ENCODE measurements at regions of chr11 and their contacts with region 1.

Region 1: GRCh38 chr11:95231127-95231880 is at the start of gene SESN3:
- DNase-seq: peak; percentile 96 to 99 (median 98)
- ATAC-seq: peak; percentile 88
- H3K4me3 ChIP-seq: peak within 1 kb of the TSS; percentile 82
- H3K4me3 Mint-ChIP-seq: peak within 1 kb of the TSS; percentile 98
- H3K27ac ChIP-seq: peak within 1 kb of the TSS; percentile 69 to 82
- H3K27ac Mint-ChIP-seq: peak within 1 kb of the TSS; percentile 89
- H3K4me1 ChIP-seq: peaks cover 16% of the 10 kb centered on the region
- H3K4me1 Mint-ChIP-seq: peaks cover 47% of the 10 kb centered on the region
- H3K27me3 ChIP-seq: no peaks in the 10 kb centered on the region
- H3K27me3 Mint-ChIP-seq: no peaks in the 10 kb centered on the region
- CTCF ChIP-seq: no peak
- total RNA-seq, gene SESN3: 63.9 to 69.1 TPM

Region 2: GRCh38 chr11:95108159-95108611 is 123.1 kb before region 1 on chr11:
- CTCF ChIA-PET with region 1: no interaction called
- POLR2A ChIA-PET with region 1: no interaction called
- intact Hi-C with region 1: no loop called
- DNase-seq: no peak
- ATAC-seq: no peak
- H3K4me3 ChIP-seq: no peak overlapping the region
- H3K4me3 Mint-ChIP-seq: no peak overlapping the region
- H3K27ac ChIP-seq: no peak overlapping the region
- H3K27ac Mint-ChIP-seq: no peak overlapping the region
- H3K4me1 ChIP-seq: no peaks in the 10 kb centered on the region
- H3K4me1 Mint-ChIP-seq: peaks cover 6% of the 10 kb centered on the region
- H3K27me3 ChIP-seq: no peaks in the 10 kb centered on the region
- H3K27me3 Mint-ChIP-seq: no peaks in the 10 kb centered on the region
- CTCF ChIP-seq: no peak

Region 3: DNA sequence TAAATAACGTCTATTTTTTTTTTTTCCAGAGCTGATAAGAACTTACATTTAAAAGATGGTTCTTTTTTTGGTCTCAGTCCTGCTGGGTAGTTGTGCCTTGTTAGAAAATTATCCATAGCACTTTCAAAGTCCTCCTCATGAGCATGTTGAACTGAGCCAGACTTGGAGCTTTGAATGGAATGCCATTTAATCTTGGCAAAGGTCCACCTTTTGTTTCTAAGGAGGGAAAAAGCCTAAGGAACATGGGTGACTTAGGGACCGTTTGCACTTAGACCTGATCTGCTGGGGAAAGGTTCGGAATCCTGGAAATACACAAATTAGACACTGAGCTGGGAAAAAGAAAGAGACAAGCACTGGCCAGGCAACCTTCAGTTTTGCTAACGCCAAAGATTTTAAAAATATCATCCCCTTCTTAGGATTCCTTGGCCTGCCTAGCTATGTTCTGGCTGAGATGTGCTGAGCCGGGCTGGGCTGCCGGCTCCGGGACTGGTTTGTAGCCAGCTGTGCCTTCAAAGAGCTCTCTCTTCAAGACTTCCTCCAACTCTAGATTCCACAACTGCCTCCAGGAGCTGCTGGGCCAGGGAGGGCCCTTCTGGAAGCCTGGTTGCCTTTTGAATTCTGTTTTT is 74.3 kb before region 1 on chr11:
- CTCF ChIA-PET with region 1: interaction called, 11 read pairs
- POLR2A ChIA-PET with region 1: interaction called, 82 read pairs
- intact Hi-C with region 1: loop called in 1 of 2 experiments (anchors 5 kb)
- DNase-seq: no peak
- ATAC-seq: no peak
- H3K4me3 ChIP-seq: no peak overlapping the region
- H3K4me3 Mint-ChIP-seq: no peak overlapping the region
- H3K27ac ChIP-seq: no peak overlapping the region
- H3K27ac Mint-ChIP-seq: peak overlapping the region; percentile 46
- H3K4me1 ChIP-seq: peaks cover 34% of the 10 kb centered on the region
- H3K4me1 Mint-ChIP-seq: peaks cover 56% of the 10 kb centered on the region
- H3K27me3 ChIP-seq: no peaks in the 10 kb centered on the region
- H3K27me3 Mint-ChIP-seq: no peaks in the 10 kb centered on the region
- CTCF ChIP-seq: no peak

Region 4: DNA sequence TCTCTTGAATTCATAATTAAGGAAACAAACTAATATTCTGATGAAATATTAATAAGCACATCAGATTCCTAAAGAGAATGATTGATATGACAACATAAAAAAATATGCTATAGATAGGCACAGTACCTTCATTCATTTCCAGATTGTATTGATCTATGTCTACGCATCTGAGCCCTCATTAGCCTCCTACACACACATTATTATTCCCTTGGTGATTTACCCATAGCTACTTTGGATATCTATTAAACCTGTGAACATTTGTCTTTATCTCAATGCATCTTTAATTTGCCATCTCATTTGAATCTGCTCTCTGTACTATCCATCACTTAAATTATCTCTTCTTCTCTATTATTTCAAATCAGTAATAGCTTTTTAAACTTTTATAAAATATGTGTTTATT is 18.7 kb before region 1 on chr11:
- CTCF ChIA-PET with region 1: interaction called, 5 read pairs
- POLR2A ChIA-PET with region 1: interaction called, 21 read pairs
- intact Hi-C with region 1: no loop called
- DNase-seq: no peak
- ATAC-seq: no peak
- H3K4me3 ChIP-seq: no peak overlapping the region
- H3K4me3 Mint-ChIP-seq: no peak overlapping the region
- H3K27ac ChIP-seq: no peak overlapping the region
- H3K27ac Mint-ChIP-seq: no peak overlapping the region
- H3K4me1 ChIP-seq: no peaks in the 10 kb centered on the region
- H3K4me1 Mint-ChIP-seq: peaks cover 54% of the 10 kb centered on the region
- H3K27me3 ChIP-seq: no peaks in the 10 kb centered on the region
- H3K27me3 Mint-ChIP-seq: no peaks in the 10 kb centered on the region
- CTCF ChIP-seq: no peak

Region 5: DNA sequence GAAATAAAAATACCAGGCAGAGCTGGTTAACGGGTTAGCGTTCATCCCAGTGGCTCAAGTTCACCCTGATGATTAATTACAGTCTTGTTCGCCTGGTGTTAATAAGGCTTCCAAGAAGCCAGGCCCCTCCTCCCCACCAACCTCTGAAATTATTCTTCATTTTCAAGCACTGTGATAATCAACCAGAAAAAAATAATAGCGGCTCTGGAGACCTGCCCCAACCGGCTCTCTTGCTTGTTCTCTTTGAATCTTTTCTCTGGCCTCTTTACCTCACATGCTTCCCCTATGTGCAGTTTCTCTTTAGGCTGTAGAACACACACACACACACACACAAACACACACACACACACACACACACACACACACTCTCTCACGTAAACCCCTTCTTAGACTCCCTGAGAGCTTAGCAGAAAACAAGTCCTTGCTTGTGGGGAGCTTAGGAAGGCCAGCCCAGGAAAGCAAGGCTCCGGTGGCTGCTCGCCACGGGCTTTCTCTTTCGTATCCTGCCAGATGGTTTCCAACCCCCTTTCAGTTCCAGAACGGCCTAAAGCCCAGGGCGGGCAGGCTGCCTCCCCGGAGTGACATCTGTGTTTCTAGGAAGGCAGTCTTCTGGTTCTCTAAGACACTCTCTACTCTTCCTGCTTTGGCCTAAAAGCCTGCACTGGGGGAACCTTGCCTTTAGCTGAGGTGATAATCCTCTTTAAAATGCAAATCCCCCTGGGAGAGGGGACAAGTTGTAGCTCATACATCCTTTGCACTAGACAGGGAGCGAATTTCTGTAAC is 106.1 kb after region 1 on chr11:
- CTCF ChIA-PET with region 1: interaction called, 3 read pairs
- POLR2A ChIA-PET with region 1: interaction called, 31 read pairs
- intact Hi-C with region 1: loop called in 1 of 2 experiments (anchors 10 kb)
- DNase-seq: peak in 12 of 14 experiments; percentile 6 to 57 (median 26)
- ATAC-seq: peak; percentile 70
- H3K4me3 ChIP-seq: peak overlapping the region; percentile 42
- H3K4me3 Mint-ChIP-seq: no peak overlapping the region
- H3K27ac ChIP-seq: peak overlapping the region in 1 of 2 donors; percentile 62
- H3K27ac Mint-ChIP-seq: no peak overlapping the region
- H3K4me1 ChIP-seq: peaks cover 16% of the 10 kb centered on the region
- H3K4me1 Mint-ChIP-seq: no peaks in the 10 kb centered on the region
- H3K27me3 ChIP-seq: no peaks in the 10 kb centered on the region
- H3K27me3 Mint-ChIP-seq: no peaks in the 10 kb centered on the region
- CTCF ChIP-seq: no peak

Region 6: GRCh38 chr11:95705485-95706124 is 474.3 kb after region 1 on chr11:
- CTCF ChIA-PET with region 1: interaction called, 12 read pairs
- POLR2A ChIA-PET with region 1: interaction called, 54 read pairs
- intact Hi-C with region 1: loop called (anchors 2 kb)
- DNase-seq: peak; percentile 76 to 93 (median 85)
- ATAC-seq: peak; percentile 92
- H3K4me3 ChIP-seq: no peak overlapping the region
- H3K4me3 Mint-ChIP-seq: no peak overlapping the region
- H3K27ac ChIP-seq: peak overlapping the region; percentile 33 to 54
- H3K27ac Mint-ChIP-seq: no peak overlapping the region
- H3K4me1 ChIP-seq: peaks cover 33% of the 10 kb centered on the region
- H3K4me1 Mint-ChIP-seq: peaks cover 11% of the 10 kb centered on the region
- H3K27me3 ChIP-seq: no peaks in the 10 kb centered on the region
- H3K27me3 Mint-ChIP-seq: no peaks in the 10 kb centered on the region
- CTCF ChIP-seq: peak; percentile 94

Region 7: DNA sequence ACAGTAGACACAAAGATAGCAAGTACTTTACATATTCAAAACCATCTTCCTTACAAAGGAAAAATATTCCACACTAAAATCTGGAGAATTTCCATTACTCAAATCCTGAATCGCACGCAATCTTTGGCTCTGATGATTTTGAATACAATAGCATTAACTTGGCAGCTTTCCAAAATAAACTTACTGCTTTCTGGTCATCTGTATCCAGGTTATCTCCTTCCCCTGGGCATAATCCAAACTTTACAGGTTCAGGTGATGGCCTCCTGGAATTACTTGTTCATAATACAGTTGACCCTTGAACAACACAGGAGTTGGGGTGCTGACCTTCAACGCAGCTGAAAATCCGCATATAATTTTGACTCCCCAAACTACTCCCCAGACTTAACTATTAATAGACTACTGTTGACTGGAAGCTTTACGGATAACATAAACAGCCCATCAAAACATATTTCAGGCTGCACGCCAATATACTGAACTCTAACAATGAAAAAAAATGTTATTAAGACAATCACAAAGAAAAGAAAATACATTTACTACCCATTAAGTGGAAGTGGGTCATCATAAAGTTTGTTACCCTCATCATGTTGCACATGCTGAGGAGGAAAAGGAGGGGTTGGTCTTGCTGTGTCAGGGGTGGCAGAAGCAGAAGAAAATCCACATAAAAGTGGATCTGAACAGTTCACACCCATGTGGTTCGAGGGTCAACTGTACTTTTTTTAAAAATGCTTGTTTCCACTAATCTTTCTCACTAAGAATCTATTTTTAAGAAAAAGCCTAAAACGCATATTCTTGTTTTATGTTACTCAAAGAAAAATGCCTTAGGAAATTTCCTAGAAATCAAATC is 686.1 kb after region 1 on chr11:
- CTCF ChIA-PET with region 1: no interaction called
- POLR2A ChIA-PET with region 1: no interaction called
- intact Hi-C with region 1: no loop called
- DNase-seq: no peak
- ATAC-seq: no peak
- H3K4me3 ChIP-seq: no peak overlapping the region
- H3K4me3 Mint-ChIP-seq: no peak overlapping the region
- H3K27ac ChIP-seq: no peak overlapping the region
- H3K27ac Mint-ChIP-seq: no peak overlapping the region
- H3K4me1 ChIP-seq: no peaks in the 10 kb centered on the region
- H3K4me1 Mint-ChIP-seq: peaks cover 16% of the 10 kb centered on the region
- H3K27me3 ChIP-seq: no peaks in the 10 kb centered on the region
- H3K27me3 Mint-ChIP-seq: no peaks in the 10 kb centered on the region
- CTCF ChIP-seq: no peak

Region 8: DNA sequence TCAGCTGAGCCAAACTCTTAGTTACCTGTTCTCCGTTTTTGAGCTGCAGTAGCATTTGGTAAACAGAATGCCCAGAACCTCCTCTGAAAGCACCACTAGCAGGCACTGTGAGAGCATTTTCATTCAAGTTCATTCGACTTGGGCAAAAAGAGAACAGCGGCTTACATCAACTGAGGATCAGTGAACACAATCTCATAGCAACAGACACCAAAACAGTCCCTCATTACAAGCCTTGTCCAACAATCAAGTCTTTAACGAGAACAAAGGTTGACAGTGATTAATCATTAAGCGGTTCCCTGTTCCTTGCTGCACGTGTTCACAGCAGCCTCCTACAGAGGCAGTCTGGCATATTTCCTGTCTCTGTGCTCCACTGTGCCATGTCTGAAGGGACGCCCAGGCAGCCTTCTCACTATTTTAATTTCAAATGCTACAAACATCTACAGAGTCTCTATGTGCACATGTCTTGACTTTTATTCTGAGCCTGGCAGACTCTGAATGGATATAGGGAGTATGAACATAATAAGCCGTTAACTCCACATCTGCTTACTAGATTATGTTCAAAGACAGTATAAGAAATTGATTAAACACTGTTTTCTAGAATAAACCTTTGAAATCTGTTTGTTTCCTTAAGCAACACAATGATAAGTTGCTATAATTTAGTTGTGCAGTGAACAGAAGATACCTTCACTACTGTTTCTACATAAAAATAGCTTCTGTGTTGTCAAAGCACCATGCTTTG is 781.0 kb after region 1 on chr11:
- CTCF ChIA-PET with region 1: no interaction called
- POLR2A ChIA-PET with region 1: no interaction called
- intact Hi-C with region 1: no loop called
- DNase-seq: peak; percentile 34 to 89 (median 57)
- ATAC-seq: peak; percentile 75
- H3K4me3 ChIP-seq: peak overlapping the region; percentile 24
- H3K4me3 Mint-ChIP-seq: peak overlapping the region; percentile 54
- H3K27ac ChIP-seq: peak overlapping the region; percentile 10 to 82
- H3K27ac Mint-ChIP-seq: no peak overlapping the region
- H3K4me1 ChIP-seq: peaks cover 33% of the 10 kb centered on the region
- H3K4me1 Mint-ChIP-seq: peaks cover 21% of the 10 kb centered on the region
- H3K27me3 ChIP-seq: no peaks in the 10 kb centered on the region
- H3K27me3 Mint-ChIP-seq: no peaks in the 10 kb centered on the region
- CTCF ChIP-seq: peak; percentile 39